Transverse colon (tissue), 4 donors: ENCODE measurements at regions of chr4 and their contacts with region 1.

Region 1: GRCh38 chr4:170014359-170015011 is 11.7 kb downstream of the MFAP3L start:
- DNase-seq: no peak
- H3K4me3 ChIP-seq: no peak overlapping the region
- H3K27ac ChIP-seq: no peak overlapping the region
- H3K4me1 ChIP-seq: peaks cover 0 to 4% (median 0%) of the 10 kb centered on the region in 4 donors
- H3K27me3 ChIP-seq: no peaks in the 10 kb centered on the region
- CTCF ChIP-seq: no peak
- EP300 ChIP-seq: no peak
- POLR2A ChIP-seq: no peak

Region 2: GRCh38 chr4:168558599-168558998 is 1455.9 kb before region 1 on chr4:
- in situ Hi-C with region 1: no loop called
- intact Hi-C with region 1: loop called (anchors 5 kb)
- DNase-seq: no peak
- H3K4me3 ChIP-seq: no peak overlapping the region
- H3K27ac ChIP-seq: no peak overlapping the region
- H3K4me1 ChIP-seq: peaks cover 0 to 29% (median 6%) of the 10 kb centered on the region in 4 donors
- H3K27me3 ChIP-seq: no peaks in the 10 kb centered on the region
- CTCF ChIP-seq: no peak
- EP300 ChIP-seq: no peak
- POLR2A ChIP-seq: no peak

Region 3: GRCh38 chr4:170446782-170447181 is 432.3 kb after region 1 on chr4:
- in situ Hi-C with region 1: no loop called
- intact Hi-C with region 1: no loop called
- DNase-seq: no peak
- H3K4me3 ChIP-seq: no peak overlapping the region
- H3K27ac ChIP-seq: no peak overlapping the region
- H3K4me1 ChIP-seq: no peaks in the 10 kb centered on the region
- H3K27me3 ChIP-seq: no peaks in the 10 kb centered on the region
- CTCF ChIP-seq: no peak
- EP300 ChIP-seq: no peak
- POLR2A ChIP-seq: no peak